GM23248 (cell line): ENCODE measurements at regions of chr5 and their contacts with region 1.

Region 1: DNA sequence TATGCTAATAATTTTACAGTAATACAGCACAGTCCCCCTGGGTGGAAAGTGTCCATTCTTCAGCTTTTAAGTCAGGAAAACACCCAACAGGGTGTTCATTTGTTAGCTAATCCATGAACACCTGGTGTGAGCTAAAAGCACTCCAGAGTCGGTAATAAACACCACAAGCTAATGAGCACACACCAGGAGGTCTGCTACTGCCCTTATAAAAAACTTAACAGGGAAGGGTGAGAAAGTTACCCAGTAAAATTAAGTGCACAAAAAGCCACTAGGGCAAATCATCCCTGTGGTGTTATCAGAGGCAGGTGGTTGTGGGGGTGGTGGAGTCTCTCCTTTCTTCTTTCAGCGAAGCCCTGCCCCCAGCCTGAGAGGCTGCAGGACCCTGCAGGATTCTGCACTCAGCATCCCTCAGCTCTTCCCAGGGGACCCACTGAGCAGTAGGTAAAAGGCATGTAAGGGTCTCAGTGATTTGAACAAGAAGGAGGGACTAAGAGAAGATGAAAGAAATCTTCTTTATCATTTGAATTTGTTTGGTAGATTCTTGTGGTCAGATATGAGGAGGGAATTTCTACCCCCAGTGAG is 14.4 kb downstream of the GDNF start:
- DNase-seq: no peak
- H3K4me3 ChIP-seq: no peak overlapping the region
- H3K27ac ChIP-seq: no peak overlapping the region
- H3K4me1 ChIP-seq: no peaks in the 10 kb centered on the region
- H3K27me3 ChIP-seq: no peaks in the 10 kb centered on the region

Region 2: DNA sequence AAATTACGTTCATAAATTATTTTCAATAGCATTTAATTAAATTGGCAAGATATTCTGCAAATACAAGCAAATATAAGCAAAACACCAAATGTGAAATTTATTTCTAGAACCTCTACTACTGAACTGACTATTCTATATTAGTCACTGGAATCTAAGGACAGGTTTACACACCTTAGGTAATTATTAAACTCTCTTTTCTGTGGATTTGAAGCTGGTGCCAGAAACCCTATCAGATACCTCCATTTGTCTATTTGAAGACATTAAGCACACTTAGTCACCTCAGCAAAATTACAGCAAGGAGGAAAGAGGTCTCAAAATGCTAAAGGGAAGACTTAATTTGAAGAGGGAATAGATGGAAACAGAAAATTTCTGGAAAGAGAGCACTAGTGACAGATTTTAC is 659.7 kb before region 1 on chr5:
- in situ Hi-C with region 1: no loop called
- DNase-seq: no peak
- H3K4me3 ChIP-seq: no peak overlapping the region
- H3K27ac ChIP-seq: no peak overlapping the region
- H3K4me1 ChIP-seq: no peaks in the 10 kb centered on the region
- H3K27me3 ChIP-seq: no peaks in the 10 kb centered on the region

Region 3: DNA sequence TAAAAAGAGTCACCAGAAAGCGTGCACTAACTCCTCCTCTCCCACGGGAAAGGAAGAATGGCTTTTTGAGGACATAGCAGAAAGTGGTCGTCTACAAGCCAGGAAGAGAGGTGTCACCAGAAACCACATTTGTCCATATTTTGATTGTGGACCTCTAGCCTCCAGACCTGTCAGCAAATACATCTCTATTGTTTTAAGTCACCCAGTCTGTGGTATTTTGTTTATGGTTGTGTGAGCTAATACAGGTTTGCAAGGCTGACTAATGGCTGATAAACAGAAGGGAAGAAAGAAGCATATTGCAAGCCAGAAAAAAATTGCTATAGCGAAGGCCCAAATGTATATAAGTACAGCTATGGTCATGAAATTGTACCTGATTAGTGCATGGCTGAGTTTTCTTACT is 424.9 kb before region 1 on chr5:
- in situ Hi-C with region 1: loop called (anchors 10 kb)
- DNase-seq: no peak
- H3K4me3 ChIP-seq: no peak overlapping the region
- H3K27ac ChIP-seq: no peak overlapping the region
- H3K4me1 ChIP-seq: no peaks in the 10 kb centered on the region
- H3K27me3 ChIP-seq: no peaks in the 10 kb centered on the region

Region 4: DNA sequence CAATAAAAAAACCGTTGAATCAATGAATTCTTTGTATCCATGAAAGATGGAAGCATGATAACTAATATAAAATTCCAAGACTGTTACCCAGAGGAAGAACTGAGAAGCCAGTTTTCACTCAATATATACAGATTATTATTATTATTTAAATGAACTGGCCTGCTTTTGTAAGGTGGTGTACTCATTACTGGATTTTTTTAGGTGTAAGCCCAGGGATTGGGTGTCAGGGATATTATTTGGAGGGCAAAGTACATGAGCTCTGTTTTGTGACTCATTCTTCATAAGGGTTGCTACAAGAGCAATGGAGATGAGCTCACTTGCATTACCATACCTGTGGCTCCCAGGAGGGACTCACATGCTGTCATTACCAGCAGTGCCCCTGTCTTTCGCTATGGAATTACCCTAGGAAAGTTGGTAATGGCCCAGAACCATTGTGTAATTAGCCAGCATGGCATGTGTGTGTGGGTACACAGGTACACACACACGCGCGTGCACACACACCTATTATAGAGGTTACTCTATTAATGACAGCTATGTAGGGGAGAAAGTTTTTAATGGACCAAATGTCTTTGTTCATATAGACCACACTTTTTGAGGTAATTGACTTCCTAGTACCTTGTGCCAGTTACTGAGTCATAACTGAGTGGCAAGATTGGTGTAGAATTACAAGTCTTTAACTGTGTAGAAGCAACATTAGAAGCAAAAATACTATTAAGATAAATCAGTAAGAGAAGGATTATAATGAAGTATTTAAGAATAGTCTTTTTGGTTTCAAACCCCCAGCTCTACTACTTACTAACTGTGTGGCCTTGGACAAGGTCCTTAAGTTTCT is 129.0 kb before region 1 on chr5:
- in situ Hi-C with region 1: no loop called
- DNase-seq: peak; percentile 77
- H3K4me3 ChIP-seq: no peak overlapping the region
- H3K27ac ChIP-seq: peak overlapping the region; percentile 24; the same call in 1 of the 2 replicates
- H3K4me1 ChIP-seq: peaks cover 15% of the 10 kb centered on the region
- H3K27me3 ChIP-seq: no peaks in the 10 kb centered on the region

Region 5: GRCh38 chr5:38104497-38105230 is 279.2 kb after region 1 on chr5:
- in situ Hi-C with region 1: no loop called
- DNase-seq: no peak
- H3K4me3 ChIP-seq: no peak overlapping the region
- H3K27ac ChIP-seq: no peak overlapping the region
- H3K4me1 ChIP-seq: no peaks in the 10 kb centered on the region
- H3K27me3 ChIP-seq: peaks cover 6% of the 10 kb centered on the region; the same call in 1 of the 2 replicates

Region 6: DNA sequence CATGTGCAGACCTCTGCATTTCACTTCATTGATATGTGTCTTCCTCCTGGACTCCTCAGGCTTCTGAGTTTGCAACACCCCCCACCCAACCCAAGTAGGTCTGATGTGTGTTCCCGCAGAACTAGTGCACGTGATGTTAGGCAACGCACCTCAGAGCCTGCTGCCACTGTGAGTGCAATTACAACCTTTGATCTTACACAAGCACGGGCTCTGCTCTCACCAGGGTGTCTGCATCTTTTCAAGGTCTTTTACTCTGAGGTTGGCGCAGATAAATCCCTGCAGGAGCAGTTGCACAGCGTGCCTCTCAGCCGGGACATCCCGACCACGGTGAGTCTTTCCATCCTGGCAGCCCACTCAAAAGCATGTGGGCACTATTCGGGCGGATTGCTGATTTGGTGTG is 513.0 kb after region 1 on chr5:
- in situ Hi-C with region 1: no loop called
- DNase-seq: no peak
- H3K4me3 ChIP-seq: no peak overlapping the region
- H3K27ac ChIP-seq: no peak overlapping the region
- H3K4me1 ChIP-seq: no peaks in the 10 kb centered on the region
- H3K27me3 ChIP-seq: peaks cover 21% of the 10 kb centered on the region; the same call in 1 of the 2 replicates